ENCODE measurements at regions of chr21 and their contacts with region 1.

Region 1: GRCh38 chr21:34745557-34746255 is 76.9 kb downstream of the CLIC6 start:
- DNase-seq: peak; percentile 63
- H3K4me3 Mint-ChIP-seq: peak overlapping the region; percentile 3
- H3K27ac Mint-ChIP-seq: no peak overlapping the region
- H3K4me1 Mint-ChIP-seq: peaks cover 4% of the 10 kb centered on the region
- H3K27me3 Mint-ChIP-seq: peaks cover 25% of the 10 kb centered on the region

Region 2: GRCh38 chr21:35400233-35400957 is 654.7 kb after region 1 on chr21:
- CTCF ChIA-PET with region 1: interaction called, 18 read pairs
- POLR2A ChIA-PET with region 1: interaction called, 3 read pairs
- DNase-seq: peak; percentile 27
- H3K4me3 Mint-ChIP-seq: no peak overlapping the region
- H3K27ac Mint-ChIP-seq: no peak overlapping the region
- H3K4me1 Mint-ChIP-seq: peaks cover 14% of the 10 kb centered on the region
- H3K27me3 Mint-ChIP-seq: no peaks in the 10 kb centered on the region

Region 3: GRCh38 chr21:35840197-35840799 is 1094.6 kb after region 1 on chr21:
- CTCF ChIA-PET with region 1: interaction called, 31 read pairs
- POLR2A ChIA-PET with region 1: no interaction called
- DNase-seq: peak; percentile 52
- H3K4me3 Mint-ChIP-seq: no peak overlapping the region
- H3K27ac Mint-ChIP-seq: no peak overlapping the region
- H3K4me1 Mint-ChIP-seq: no peaks in the 10 kb centered on the region
- H3K27me3 Mint-ChIP-seq: peaks cover 13% of the 10 kb centered on the region